T-cell (primary cell): ENCODE measurements at regions of chr6 and their contacts with region 1.

Region 1: GRCh38 chr6:131532580-131533039 is 40.4 kb upstream of the ARG1 start:
- DNase-seq: peak in 1 of 35 experiments; percentile 14
- ATAC-seq: peak in 3 of 4 experiments; percentile 34 to 61 (median 46)
- H3K4me3 ChIP-seq: no peak overlapping the region
- H3K4me3 Mint-ChIP-seq: peak overlapping the region in 1 of 3 donors; percentile 9
- H3K27ac ChIP-seq: no peak overlapping the region
- H3K27ac Mint-ChIP-seq: peak overlapping the region; percentile 85 to 94
- H3K4me1 ChIP-seq: peaks cover 10 to 19% of the 10 kb centered on the region in 2 experiments
- H3K4me1 Mint-ChIP-seq: peaks cover 55 to 61% (median 56%) of the 10 kb centered on the region in 3 donors
- H3K27me3 ChIP-seq: no peaks in the 10 kb centered on the region
- H3K27me3 Mint-ChIP-seq: no peaks in the 10 kb centered on the region

Region 2: GRCh38 chr6:130885392-130886192 is 647.0 kb before region 1 on chr6:
- CTCF ChIA-PET with region 1: interaction called, 16 to 65 read pairs
- POLR2A ChIA-PET with region 1: no interaction called
- DNase-seq: peak; percentile 25 to 89 (median 66)
- ATAC-seq: peak; percentile 75 to 93 (median 84)
- H3K4me3 ChIP-seq: no peak overlapping the region
- H3K4me3 Mint-ChIP-seq: no peak overlapping the region
- H3K27ac ChIP-seq: no peak overlapping the region
- H3K27ac Mint-ChIP-seq: no peak overlapping the region
- H3K4me1 ChIP-seq: no peaks in the 10 kb centered on the region
- H3K4me1 Mint-ChIP-seq: no peaks in the 10 kb centered on the region
- H3K27me3 ChIP-seq: no peaks in the 10 kb centered on the region
- H3K27me3 Mint-ChIP-seq: no peaks in the 10 kb centered on the region

Region 3: GRCh38 chr6:131093334-131093733 is 439.3 kb before region 1 on chr6:
- CTCF ChIA-PET with region 1: no interaction called
- POLR2A ChIA-PET with region 1: no interaction called
- DNase-seq: no peak
- ATAC-seq: no peak
- H3K4me3 ChIP-seq: no peak overlapping the region
- H3K4me3 Mint-ChIP-seq: no peak overlapping the region
- H3K27ac ChIP-seq: no peak overlapping the region
- H3K27ac Mint-ChIP-seq: no peak overlapping the region
- H3K4me1 ChIP-seq: no peaks in the 10 kb centered on the region
- H3K4me1 Mint-ChIP-seq: no peaks in the 10 kb centered on the region
- H3K27me3 ChIP-seq: no peaks in the 10 kb centered on the region
- H3K27me3 Mint-ChIP-seq: peaks cover 2 to 7% of the 10 kb centered on the region in 2 donors

Region 4: GRCh38 chr6:131182991-131183425 is 349.6 kb before region 1 on chr6:
- CTCF ChIA-PET with region 1: interaction called, 32 to 42 read pairs
- POLR2A ChIA-PET with region 1: interaction called in 1 of 2 experiments, 7 read pairs
- DNase-seq: peak in 22 of 35 experiments; percentile 4 to 57 (median 20)
- ATAC-seq: peak; percentile 63 to 89 (median 78)
- H3K4me3 ChIP-seq: no peak overlapping the region
- H3K4me3 Mint-ChIP-seq: peak overlapping the region; percentile 53 to 73 (median 70)
- H3K27ac ChIP-seq: no peak overlapping the region
- H3K27ac Mint-ChIP-seq: peak overlapping the region; percentile 93 to 96
- H3K4me1 ChIP-seq: peaks cover 4 to 11% of the 10 kb centered on the region in 2 experiments
- H3K4me1 Mint-ChIP-seq: peaks cover 8 to 12% (median 11%) of the 10 kb centered on the region in 3 donors
- H3K27me3 ChIP-seq: no peaks in the 10 kb centered on the region
- H3K27me3 Mint-ChIP-seq: no peaks in the 10 kb centered on the region

Region 5: GRCh38 chr6:131519670-131520436 is 12.8 kb before region 1 on chr6:
- CTCF ChIA-PET with region 1: interaction called, 15 to 40 read pairs
- POLR2A ChIA-PET with region 1: no interaction called
- DNase-seq: peak in 29 of 35 experiments; percentile 13 to 71 (median 35)
- ATAC-seq: peak; percentile 94 to 96 (median 94)
- H3K4me3 ChIP-seq: no peak overlapping the region
- H3K4me3 Mint-ChIP-seq: no peak overlapping the region
- H3K27ac ChIP-seq: no peak overlapping the region
- H3K27ac Mint-ChIP-seq: no peak overlapping the region
- H3K4me1 ChIP-seq: peaks cover 2 to 11% of the 10 kb centered on the region in 2 experiments
- H3K4me1 Mint-ChIP-seq: peaks cover 18 to 24% (median 20%) of the 10 kb centered on the region in 3 donors
- H3K27me3 ChIP-seq: no peaks in the 10 kb centered on the region
- H3K27me3 Mint-ChIP-seq: no peaks in the 10 kb centered on the region

Region 6: DNA sequence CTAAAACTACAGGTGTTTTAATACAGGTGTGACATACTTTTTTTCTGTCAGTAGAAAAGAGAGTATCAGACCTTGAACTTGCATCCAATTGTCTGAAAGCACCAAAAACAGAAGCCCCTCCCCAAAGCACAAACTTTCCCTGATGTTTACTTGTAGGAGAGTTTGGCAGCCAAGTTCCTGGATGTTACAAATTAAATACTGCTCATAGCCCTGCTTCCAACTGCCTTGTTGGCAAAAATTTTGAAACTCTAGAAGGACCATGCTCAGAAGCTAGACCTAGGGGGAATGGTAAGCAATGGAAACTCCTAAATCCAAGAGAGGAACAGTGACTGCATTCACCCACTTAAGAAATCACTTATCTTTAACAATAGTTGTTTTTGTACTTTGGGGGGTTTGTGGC is 23.4 kb after region 1 on chr6:
- CTCF ChIA-PET with region 1: no interaction called
- POLR2A ChIA-PET with region 1: no interaction called
- DNase-seq: no peak
- ATAC-seq: no peak
- H3K4me3 ChIP-seq: no peak overlapping the region
- H3K4me3 Mint-ChIP-seq: no peak overlapping the region
- H3K27ac ChIP-seq: no peak overlapping the region
- H3K27ac Mint-ChIP-seq: no peak overlapping the region
- H3K4me1 ChIP-seq: no peaks in the 10 kb centered on the region
- H3K4me1 Mint-ChIP-seq: no peaks in the 10 kb centered on the region
- H3K27me3 ChIP-seq: peaks cover 0 to 3% of the 10 kb centered on the region in 2 experiments
- H3K27me3 Mint-ChIP-seq: no peaks in the 10 kb centered on the region

Region 7: GRCh38 chr6:131627724-131628682 is 95.4 kb after region 1 on chr6 and contains the start of gene MED23:
- CTCF ChIA-PET with region 1: interaction called in 1 of 2 experiments, 10 read pairs
- POLR2A ChIA-PET with region 1: no interaction called
- DNase-seq: peak; percentile 81 to 98 (median 91)
- ATAC-seq: peak; percentile 93 to 98 (median 96)
- H3K4me3 ChIP-seq: peak within 1 kb of the TSS; percentile 84 to 92
- H3K4me3 Mint-ChIP-seq: peak within 1 kb of the TSS; percentile 94 to 99 (median 98)
- H3K27ac ChIP-seq: peak within 1 kb of the TSS; percentile 58
- H3K27ac Mint-ChIP-seq: peak within 1 kb of the TSS; percentile 95 to 96
- H3K4me1 ChIP-seq: peaks cover 6 to 15% of the 10 kb centered on the region in 2 experiments
- H3K4me1 Mint-ChIP-seq: peaks cover 38 to 44% (median 39%) of the 10 kb centered on the region in 3 donors
- H3K27me3 ChIP-seq: no peaks in the 10 kb centered on the region
- H3K27me3 Mint-ChIP-seq: no peaks in the 10 kb centered on the region
- total RNA-seq, gene MED23: 45.6 to 64.5 (median 46.6) TPM